Left colon (tissue), 2 donors: ENCODE measurements at regions of chr1 and their contacts with region 1.

Region 1: DNA sequence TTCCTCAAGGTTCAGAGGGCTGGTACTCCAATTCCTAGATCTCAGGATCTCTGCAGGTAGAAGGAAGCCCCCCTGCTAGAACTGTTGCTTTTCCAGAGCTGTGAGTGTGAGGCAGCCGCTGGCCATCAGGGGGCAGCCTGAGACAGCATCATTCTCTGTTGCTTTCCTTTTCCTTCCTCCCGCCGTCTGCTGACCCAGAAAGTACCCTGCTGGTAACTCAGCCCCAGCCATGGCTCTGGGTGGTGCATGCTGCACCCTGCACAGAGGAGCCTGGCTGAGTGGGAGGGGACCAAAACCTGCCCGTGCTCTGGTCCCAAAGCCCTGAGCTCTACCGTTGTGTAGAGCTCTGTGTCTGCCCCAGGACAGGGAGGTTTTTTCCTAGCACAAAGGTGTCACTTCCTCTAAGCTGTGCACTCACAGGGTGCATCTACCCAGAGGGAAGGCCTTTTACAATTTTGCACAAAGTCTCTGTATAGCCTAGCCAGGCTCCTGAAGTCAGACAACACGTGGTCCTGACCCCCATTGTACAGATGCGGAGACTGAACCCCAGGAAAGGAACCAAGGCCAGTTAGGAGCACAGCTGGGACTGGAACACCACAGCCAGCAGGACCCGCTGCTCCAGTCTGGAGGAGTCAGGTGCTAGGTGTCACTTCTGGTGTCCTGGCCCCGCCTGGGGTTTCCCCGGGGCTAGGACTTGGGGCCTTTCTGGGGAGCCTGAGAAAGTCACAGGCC is 5.6 kb upstream of the FAM131C start:
- DNase-seq: peak; percentile 68 to 85
- ATAC-seq: peak; percentile 70

Region 2: DNA sequence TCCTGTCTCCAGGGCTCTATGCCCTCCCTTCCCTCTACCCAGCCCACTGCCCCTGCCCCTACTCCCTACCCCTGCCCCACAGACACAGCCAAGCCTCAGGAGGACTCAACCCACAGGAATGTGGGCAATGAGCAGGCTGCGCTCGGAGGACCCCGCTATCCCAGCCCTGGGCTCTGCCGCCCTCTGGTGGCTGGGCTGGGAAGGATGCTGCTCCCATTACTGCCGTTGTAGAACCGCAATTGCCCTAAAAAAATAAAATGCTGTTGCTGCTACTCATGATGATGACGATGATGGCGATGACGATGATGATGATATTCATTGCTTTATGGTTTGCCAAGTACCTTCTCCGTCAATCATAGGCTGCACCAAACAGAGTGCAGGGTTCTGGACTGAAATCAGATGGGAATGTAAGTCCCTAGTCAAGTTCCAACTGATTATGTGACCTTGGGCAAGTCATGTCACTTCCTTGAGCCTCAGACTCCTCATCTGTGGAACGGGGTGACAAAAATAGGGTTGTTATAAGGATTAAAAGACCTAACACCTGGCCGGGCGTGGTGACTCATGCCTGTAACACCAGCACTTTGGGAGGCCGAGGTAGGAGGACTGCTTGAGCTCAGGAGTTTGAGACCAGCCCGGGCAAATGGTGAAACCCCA is 108.8 kb after region 1 on chr1:
- intact Hi-C with region 1: loop called (anchors 2 to 5 kb)
- DNase-seq: peak; percentile 71 to 80
- ATAC-seq: peak; percentile 57

Region 3: DNA sequence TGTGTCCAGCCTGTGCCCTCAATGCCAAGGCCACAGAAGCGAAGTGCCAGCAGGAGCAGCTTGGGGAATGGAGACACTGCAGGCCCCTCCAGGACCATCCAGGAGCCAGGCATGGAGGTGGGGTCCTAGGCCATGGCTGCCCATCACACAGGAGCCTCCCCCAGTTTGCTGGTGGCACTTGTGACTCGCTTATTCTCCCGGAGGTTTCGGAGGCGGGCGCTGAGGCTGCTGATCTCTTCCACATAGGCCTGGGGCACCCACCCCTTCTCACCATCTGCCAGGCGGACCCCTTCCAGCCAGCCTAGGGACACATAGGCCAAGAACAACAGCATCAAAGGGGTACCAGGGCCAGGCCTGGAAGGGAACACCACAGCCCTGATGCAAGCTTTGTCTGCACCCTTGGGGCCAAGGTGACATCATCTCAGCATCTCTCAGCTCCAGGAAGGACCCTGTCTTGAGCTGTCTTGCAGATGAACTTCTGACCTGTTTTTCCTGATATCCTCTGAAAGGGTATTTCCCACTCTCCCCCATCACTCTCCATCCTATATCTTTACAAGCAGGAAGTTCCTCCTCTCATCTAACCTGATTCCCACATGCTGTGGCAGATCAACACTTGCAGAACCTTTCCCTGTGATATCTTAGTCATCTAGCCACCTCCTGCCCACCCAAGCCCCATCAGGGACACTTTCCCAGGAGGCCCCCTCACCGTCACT is 119.5 kb after region 1 on chr1:
- intact Hi-C with region 1: no loop called
- DNase-seq: no peak
- ATAC-seq: no peak

Region 4: DNA sequence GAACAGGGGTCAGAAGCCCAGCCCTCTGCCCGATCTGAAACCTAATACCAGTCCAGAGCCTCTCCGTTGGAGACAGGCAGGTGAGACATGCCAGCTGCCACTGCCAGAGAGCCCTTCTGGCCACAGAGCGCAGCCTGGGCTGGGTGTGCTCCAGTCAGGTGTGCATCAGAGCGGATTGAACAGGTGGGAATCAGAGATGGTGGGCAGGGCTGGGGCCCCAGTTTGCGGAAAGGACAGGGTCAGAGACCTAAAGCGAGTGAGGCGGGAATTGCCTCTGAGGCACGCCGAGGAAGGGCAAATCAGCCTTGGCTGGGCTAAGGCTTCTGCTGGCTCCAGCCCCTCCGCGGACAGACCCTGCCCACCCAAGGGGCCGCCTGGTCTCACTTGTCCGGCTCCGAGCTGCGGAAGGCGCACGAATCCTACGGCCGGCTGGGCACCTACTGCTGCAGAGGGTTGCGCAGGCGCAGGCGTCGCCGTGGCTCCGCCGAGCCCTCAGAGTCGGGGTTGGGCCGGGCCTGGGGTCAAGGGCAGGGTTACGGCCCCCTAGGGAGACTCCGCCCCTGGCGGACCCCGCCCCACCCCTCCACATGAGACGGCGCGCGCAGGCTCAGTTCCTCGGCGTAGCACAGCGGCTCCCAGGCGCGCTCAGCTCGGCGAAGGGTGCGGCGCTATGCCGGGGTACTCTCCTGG is 147.5 kb after region 1 on chr1:
- intact Hi-C with region 1: no loop called
- DNase-seq: peak; percentile 67 to 77
- ATAC-seq: peak; percentile 92

Region 5: GRCh38 chr1:16243936-16244649 is 165.0 kb after region 1 on chr1:
- intact Hi-C with region 1: loop called in 1 of 2 experiments (anchors 5 kb)
- DNase-seq: peak; percentile 66 to 84
- ATAC-seq: peak; percentile 69

Region 6: DNA sequence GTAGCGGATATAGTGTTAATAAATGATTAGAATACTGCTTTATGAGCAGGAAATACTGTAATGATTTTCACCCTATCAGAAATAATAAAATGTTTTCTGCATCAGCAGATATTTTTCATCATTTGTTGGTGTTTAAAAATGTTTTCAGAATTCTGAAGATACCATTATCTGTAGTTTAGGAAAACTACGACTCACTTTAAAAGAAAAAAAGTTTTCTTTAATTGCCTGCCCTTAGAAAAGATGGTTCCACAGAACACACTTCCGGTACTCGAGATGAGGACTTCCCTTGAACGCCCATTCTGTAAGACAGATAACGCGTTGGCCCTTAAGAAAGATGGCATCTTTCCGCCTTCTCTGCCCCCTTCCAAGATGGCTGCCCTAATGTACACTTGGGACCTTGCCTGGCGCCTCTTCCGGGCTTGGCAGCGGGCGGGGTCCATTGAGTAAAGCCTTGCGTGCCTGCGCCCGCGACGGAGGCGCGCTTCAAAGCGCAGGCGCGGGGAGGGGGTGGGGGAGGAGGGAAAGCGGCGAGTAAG is 287.7 kb after region 1 on chr1 and contains the start of gene SZRD1:
- intact Hi-C with region 1: loop called in 1 of 2 experiments (anchors 5 kb)
- DNase-seq: peak; percentile 96 to 97
- ATAC-seq: peak; percentile 91
- total RNA-seq, gene SZRD1: 111 to 123 TPM